Heart right ventricle (tissue), 16 donors: ENCODE measurements at regions of chr2 and their contacts with region 1.

Region 1: DNA sequence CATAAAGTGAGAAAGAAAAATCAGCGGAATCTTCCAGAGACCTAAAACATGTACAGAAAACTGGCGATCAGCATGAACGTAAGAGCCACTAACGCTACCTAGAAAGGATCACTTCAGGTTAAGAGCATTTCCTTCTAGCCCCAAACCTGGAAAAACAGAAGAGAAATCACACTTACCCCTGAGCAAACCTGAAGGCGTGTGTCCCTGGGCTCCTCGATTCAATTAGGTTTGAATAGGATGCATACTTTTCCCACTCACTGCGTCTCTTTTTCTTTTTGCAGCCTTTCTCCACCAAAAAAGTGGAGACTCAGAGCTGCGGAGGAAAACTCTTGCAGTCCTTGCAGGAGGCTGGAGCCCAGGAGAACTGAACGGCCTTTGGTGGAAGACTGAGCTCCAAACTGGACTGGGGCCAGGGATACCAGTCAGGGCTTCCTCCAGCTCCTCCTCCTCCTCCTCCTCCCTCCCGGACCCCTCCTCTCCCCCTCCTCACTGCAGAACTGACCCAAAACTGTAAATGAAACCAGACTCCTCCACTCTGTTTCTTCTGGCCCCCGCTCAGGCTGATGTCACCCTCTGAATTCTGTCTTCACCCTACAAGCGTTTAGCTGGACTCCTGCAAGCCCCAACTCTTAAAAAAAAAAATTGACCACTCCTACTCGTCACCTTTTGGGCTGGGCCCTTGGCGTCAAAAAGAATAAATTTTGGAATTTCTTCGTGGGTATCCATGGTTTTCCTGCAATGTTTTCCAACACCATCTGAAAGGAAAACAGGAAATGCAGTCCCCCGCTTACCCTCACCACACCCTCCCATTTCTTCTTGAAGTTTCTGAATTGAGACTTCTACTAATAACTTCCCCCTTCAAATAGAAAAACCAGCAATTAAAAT is at the start of gene COL6A3:
- DNase-seq: peak; percentile 59 to 77
- ATAC-seq: peak; percentile 65 to 81 (median 69)
- H3K4me3 ChIP-seq: peak within 1 kb of the TSS; percentile 32 to 63 (median 57)
- H3K27ac ChIP-seq: peak within 1 kb of the TSS; percentile 66 to 87 (median 81)
- H3K4me1 ChIP-seq: peaks cover 0 to 20% (median 2%) of the 10 kb centered on the region in 9 donors
- H3K27me3 ChIP-seq: peaks cover 0 to 26% (median 3%) of the 10 kb centered on the region in 7 donors
- CTCF ChIP-seq: no peak
- total RNA-seq, gene COL6A3: 27.7 to 222 (median 47.5) TPM

Region 2: GRCh38 chr2:237122214-237122666 is 291.8 kb before region 1 on chr2:
- intact Hi-C with region 1: loop called in 5 of 10 experiments (anchors 2 to 10 kb)
- DNase-seq: peak; percentile 47 to 65
- ATAC-seq: peak; percentile 56 to 86 (median 74)
- H3K4me3 ChIP-seq: no peak overlapping the region
- H3K27ac ChIP-seq: no peak overlapping the region
- H3K4me1 ChIP-seq: peaks cover 0 to 17% (median 0%) of the 10 kb centered on the region in 9 donors
- H3K27me3 ChIP-seq: no peaks in the 10 kb centered on the region
- CTCF ChIP-seq: peak; percentile 46 to 76 (median 71)

Region 3: DNA sequence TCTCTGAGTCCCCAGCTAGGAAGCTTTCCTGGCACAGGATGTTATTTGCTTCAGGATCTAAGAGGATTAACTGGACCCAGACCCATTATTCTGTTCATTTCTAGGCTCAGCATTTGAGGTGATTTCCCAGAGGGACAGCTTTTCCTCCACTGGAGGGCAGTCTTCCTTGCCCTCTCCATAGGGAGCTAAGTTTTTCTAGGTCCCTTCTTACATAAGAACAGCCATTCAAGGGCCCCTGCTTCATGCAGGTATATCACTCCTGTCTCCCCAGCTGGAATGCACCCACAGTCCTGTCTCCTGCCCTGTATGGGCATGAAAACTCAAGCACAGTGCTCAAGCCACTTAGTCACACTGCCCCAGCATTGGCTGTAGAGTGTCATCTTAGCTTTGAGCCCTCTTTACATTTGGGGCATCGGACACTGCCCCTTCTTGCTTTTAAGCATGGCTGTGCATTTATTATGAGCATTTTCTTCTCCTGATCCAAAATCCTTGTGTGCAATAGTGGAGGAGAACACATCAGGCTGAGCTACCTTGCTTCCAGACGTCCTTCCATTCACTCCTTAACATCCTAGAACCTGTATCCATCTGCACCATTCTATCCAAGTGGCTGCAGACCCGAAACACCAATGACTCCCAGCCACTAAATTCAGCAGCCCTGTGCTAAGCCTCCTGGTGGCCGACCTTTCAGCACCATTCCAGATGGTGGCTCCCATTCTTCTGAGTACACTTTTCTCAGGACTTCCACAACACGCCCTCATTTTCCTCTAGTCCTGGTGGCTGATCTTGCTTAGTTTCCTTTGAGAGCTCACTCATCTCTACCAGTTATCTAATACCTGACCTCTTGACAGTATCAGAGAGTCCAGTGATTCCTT is 248.4 kb before region 1 on chr2:
- intact Hi-C with region 1: loop called in 6 of 10 experiments (anchors 2 to 5 kb)
- DNase-seq: no peak
- ATAC-seq: peak in 3 of 8 donors; percentile 12 to 39 (median 33)
- H3K4me3 ChIP-seq: no peak overlapping the region
- H3K27ac ChIP-seq: peak overlapping the region in 7 of 10 donors; percentile 33 to 75 (median 47)
- H3K4me1 ChIP-seq: peaks cover 0 to 12% (median 5%) of the 10 kb centered on the region in 9 donors
- H3K27me3 ChIP-seq: no peaks in the 10 kb centered on the region
- CTCF ChIP-seq: peak; percentile 10 to 61 (median 54)

Region 4: DNA sequence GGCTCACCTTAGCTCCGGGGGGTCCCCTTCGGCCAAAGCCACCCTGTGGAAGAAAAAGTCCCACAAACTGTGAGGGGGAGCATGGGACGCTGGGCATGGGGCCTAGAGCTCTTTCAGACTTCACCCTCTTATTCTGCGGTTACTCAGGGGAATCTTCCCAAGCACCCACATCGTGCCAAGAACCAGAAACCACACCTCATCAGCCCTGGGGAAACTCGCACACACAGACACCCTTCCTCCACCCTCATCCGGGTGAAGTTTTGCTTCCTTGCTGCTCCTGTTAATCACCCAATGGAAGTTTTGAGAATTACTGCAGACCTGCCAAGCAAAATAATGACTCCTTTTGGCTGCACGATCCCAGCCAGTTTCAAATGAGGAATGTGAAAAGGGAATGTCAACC is 59.1 kb before region 1 on chr2:
- intact Hi-C with region 1: no loop called
- DNase-seq: peak in 1 of 2 donors; percentile 18
- ATAC-seq: peak in 5 of 8 donors; percentile 9 to 68 (median 53)
- H3K4me3 ChIP-seq: no peak overlapping the region
- H3K27ac ChIP-seq: peak overlapping the region in 2 of 10 donors; percentile 25 to 41
- H3K4me1 ChIP-seq: peaks cover 0 to 7% (median 0%) of the 10 kb centered on the region in 9 donors
- H3K27me3 ChIP-seq: peaks cover 0 to 37% (median 13%) of the 10 kb centered on the region in 7 donors
- CTCF ChIP-seq: no peak

Region 5: DNA sequence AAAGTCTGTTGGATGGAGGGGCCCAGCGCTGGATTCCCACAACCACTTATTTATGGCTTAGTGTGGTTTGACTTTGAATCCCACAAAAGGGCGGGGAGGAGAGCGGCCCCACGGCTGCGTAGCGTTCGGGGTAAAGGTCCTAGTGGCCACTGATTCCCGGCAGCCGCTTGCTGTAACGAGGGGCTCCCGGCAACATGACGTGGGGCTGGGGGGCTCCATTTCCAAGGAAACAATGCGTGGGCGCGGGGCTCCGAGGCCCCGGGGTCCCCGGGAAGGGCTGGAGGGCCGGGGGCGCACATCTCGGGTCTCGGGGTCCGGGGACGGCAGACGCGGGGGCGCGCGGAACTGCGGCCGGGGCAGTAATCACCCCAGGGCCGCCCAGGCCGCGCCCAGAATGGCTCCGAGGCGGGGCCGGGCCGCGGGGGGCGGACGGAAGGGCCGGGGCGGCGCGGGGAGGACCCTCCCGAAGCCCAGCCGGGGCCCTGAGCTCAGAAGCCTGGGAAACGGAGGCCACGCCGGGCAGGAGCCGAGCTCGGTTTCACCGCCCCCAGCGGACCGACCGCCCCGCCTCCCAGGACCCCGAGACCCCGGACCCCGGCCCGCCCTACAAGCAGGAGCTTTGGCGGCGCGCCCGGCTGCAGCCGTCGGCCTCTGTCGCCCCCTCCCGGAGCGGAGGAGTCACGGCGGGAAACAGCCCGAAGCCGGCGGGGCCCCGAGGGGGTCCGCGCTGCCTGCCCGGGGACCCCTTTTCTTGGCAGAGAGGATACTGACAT is 61.1 kb after region 1 on chr2:
- intact Hi-C with region 1: loop called in 1 of 10 experiments (anchors 2 kb)
- DNase-seq: peak; percentile 81 to 88
- ATAC-seq: peak; percentile 79 to 93 (median 86)
- H3K4me3 ChIP-seq: peak overlapping the region; percentile 56 to 88 (median 74)
- H3K27ac ChIP-seq: peak overlapping the region; percentile 82 to 98 (median 94)
- H3K4me1 ChIP-seq: peaks cover 0 to 40% (median 25%) of the 10 kb centered on the region in 9 donors
- H3K27me3 ChIP-seq: peaks cover 0 to 21% (median 0%) of the 10 kb centered on the region in 7 donors
- CTCF ChIP-seq: peak; percentile 86 to 98 (median 95)

Region 6: DNA sequence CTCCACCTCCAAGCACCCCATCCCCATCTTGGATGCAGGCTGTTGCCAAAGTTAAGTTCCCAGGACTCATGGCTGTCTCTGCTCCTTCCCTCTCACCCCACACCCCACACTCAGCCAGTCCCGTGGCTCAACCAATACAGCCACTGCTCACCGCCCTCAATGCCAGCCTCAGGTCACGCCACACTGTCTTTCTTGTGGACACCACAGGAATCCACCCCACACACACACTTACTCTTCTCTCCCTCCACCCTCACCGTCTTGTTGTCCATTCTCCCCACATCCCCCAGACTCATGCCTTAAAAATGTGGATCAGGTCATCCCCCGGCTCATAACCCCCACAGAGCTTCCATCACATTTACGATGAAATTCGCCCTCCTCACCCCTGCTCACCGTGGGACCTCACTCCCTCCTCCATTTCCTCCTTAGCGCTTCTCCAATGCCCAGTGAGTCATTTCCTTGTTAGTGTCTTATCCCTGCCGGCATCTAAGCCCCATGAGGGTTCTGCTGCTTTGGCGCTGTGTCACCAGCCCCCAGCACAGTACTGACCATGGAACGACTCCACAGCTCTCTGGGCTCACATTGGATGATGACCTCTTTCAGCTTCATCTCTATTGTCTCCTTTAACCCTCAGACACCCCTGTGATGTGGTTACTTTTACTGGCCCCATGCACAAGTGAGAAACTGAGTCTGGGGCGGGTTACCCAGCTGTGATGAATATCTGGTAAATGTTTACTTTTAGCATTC is 86.8 kb after region 1 on chr2:
- intact Hi-C with region 1: no loop called
- DNase-seq: no peak
- ATAC-seq: peak in 4 of 8 donors; percentile 15 to 58 (median 48)
- H3K4me3 ChIP-seq: no peak overlapping the region
- H3K27ac ChIP-seq: no peak overlapping the region
- H3K4me1 ChIP-seq: peaks cover 0 to 26% (median 3%) of the 10 kb centered on the region in 9 donors
- H3K27me3 ChIP-seq: peaks cover 0 to 3% (median 0%) of the 10 kb centered on the region in 7 donors
- CTCF ChIP-seq: no peak